Endothelial cell of umbilical vein (primary cell): ENCODE measurements at regions of chr1 and their contacts with region 1.

Region 1: DNA sequence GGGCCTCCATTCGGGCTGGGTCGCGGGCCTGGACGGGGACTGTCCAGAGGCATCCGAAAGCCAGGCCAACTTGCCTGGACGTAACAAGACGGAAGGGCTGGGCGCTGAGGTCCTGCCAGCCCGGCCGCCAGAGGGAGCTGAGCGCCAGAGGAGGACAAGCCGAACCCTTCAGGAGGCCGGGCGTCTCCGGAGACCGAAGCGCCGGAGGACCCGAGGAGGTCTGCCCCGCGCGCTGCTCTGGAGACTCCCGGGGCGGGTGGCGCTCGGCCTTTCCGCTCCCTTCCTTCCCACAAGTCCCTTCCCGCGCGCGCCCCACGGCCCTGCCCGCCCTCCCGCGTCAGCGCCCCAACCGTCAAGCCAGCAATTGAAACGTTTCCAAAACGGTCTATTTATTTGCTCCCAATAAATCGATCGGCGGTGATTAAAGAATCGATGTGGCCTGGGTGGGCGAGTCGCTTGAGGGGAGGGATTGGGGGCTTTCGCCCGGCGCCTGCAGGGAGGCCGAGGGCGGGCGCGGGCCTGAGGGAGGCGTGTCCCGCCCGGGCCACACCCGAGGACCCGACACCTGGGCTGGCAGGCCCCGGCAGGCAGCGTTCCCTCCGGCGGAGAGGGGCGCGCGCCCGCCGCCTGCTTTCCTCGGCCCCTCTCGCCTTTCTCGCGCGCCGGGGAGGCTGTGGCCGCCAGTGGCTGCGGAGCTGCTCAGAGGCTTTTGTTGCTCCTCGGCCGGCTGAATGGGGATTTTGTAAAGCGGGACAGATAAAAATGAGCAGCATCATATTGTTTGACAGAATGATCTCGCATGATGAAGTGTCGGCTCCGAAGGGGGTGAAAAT is 5.2 kb upstream of the FOXD3 start:
- DNase-seq: peak; percentile 54
- H3K4me3 ChIP-seq: peak overlapping the region in 1 of 3 experiments; percentile 21
- H3K27ac ChIP-seq: no peak overlapping the region
- H3K4me1 ChIP-seq: peaks cover 2% of the 10 kb centered on the region
- H3K27me3 ChIP-seq: peaks cover 65 to 72% of the 10 kb centered on the region in 2 experiments
- CTCF ChIP-seq: peak; percentile 57 to 79
- POLR2A ChIP-seq: no peak

Region 2: DNA sequence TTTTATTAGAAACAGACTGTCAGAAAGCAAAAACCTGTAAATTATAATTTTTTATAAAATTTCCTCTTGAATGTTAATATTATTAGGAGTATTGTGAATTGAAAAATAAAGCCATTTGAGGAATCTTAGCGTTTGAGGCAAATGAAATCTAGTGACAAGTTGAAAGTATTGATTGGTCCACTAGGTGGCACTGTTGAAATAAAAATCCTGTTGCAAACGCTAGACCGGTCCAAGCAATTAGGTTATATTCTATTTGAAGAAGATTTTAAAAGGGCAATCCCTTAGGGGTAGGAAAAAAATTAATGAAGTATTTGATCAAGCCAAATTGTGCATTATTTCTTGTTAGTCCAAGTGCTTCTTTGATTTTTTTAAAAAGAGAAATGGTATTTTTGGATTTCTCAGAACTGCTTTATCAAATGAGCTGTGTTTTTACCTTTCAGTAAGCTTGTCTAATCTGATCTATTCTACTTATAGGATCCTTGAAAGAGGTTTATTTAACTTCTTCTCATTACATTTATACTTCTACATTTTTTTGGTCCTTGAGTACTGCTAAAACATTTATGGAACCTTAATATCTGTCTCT is 475.5 kb before region 1 on chr1:
- CTCF ChIA-PET with region 1: no interaction called
- POLR2A ChIA-PET with region 1: no interaction called
- dilution Hi-C with region 1: no loop called
- intact Hi-C with region 1: loop called (anchors 1 kb)
- DNase-seq: peak; percentile 70
- H3K4me3 ChIP-seq: no peak overlapping the region
- H3K27ac ChIP-seq: no peak overlapping the region
- H3K4me1 ChIP-seq: no peaks in the 10 kb centered on the region
- H3K27me3 ChIP-seq: no peaks in the 10 kb centered on the region
- CTCF ChIP-seq: peak; percentile 35 to 37
- POLR2A ChIP-seq: no peak

Region 3: DNA sequence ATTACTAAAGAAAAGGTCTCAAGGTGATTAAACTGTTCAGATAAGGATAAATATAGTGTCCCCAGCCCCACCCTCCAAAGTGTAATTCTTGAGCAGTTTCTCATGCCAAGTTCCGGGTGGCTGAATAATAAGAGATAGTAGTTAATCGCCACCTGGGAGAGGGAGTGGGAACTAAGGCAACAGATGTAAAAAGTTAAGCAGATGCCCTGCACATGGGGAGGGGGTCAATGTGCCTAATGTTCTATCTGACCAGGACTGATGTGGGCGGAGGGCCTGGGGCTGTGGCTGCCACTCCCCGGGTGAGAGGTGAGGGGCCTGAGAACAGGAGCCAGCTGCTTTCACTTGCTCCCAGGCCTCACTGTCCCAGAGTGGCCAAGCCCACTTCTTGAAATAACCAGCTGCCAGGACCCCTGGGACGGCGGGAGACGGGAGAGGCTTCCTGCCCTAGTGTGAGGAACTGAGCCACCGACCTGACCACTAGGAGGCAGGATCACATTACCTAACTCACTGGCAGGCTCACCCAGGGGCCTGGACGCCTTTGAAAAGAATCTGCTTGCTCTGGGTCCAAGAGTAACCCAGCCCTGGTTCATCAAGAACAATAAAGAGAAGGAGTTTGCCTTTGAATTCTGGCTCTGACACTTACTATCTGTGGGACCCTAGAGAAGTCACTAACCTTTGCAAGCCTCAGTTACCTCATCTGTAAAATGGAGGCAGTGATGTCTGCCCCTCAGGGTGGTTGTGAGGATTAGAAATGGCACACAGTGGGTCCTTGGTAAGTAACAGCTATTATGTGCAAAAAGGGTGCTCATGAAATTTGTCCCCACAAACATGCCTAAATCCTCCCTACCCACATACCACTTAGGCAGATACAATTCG is 354.1 kb before region 1 on chr1:
- CTCF ChIA-PET with region 1: interaction called, 3 read pairs
- POLR2A ChIA-PET with region 1: no interaction called
- dilution Hi-C with region 1: no loop called
- intact Hi-C with region 1: loop called (anchors 10 kb)
- DNase-seq: peak; percentile 29
- H3K4me3 ChIP-seq: no peak overlapping the region
- H3K27ac ChIP-seq: no peak overlapping the region
- H3K4me1 ChIP-seq: no peaks in the 10 kb centered on the region
- H3K27me3 ChIP-seq: no peaks in the 10 kb centered on the region
- CTCF ChIP-seq: peak; percentile 51 to 67
- POLR2A ChIP-seq: no peak

Region 4: GRCh38 chr1:63327417-63328139 is 10.4 kb after region 1 on chr1:
- CTCF ChIA-PET with region 1: interaction called, 10 read pairs
- POLR2A ChIA-PET with region 1: no interaction called
- dilution Hi-C with region 1: no loop called
- intact Hi-C with region 1: no loop called
- DNase-seq: peak; percentile 57
- H3K4me3 ChIP-seq: no peak overlapping the region
- H3K27ac ChIP-seq: no peak overlapping the region
- H3K4me1 ChIP-seq: no peaks in the 10 kb centered on the region
- H3K27me3 ChIP-seq: peaks cover 74 to 100% of the 10 kb centered on the region in 2 experiments
- CTCF ChIP-seq: peak; percentile 82 to 90
- POLR2A ChIP-seq: no peak

Region 5: DNA sequence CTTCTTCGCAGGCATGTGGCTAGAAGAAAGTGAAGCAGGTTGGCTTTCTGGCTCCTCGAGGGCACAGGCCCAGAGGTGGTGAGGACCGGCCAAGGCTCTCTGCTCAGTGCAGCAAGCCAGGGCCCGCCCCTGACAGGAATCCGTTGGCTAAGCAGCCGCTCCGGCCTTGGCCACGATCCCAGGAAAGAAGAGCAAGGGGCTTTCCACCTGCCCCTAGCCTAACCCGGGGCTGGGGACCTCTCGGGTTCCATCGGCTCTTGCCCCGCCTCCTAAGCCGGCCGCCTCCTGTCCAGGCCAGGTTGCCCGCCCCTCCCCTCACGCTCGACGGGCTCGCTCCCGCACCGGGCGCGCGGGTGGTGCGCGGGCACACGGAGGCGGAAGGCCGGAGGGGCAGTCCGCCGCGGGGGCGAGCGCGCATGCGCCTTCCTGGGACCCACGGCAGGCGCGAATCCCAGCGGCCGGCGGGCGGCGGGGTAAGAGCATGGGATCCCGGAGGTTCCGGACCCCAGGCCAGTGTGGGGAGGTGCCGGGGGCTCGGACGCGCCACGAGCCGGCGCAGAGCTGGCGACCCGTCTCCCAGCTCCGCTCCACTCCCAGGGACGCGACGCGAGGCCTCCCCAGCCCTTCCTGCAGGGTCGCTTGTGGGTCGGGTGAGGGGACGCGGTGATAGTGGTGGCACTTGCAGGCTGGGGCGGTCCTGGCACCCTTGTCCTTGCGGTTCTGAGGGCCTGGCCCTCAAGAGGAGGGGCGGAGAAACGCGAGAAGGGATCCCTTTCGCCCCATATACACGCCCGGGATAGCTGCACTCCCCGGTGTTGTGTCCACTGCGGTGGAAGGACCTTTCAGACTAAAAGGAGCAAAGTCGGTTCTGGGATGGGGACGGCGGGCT is 50.3 kb after region 1 on chr1 and contains the start of gene ALG6:
- CTCF ChIA-PET with region 1: no interaction called
- POLR2A ChIA-PET with region 1: no interaction called
- dilution Hi-C with region 1: no loop called
- intact Hi-C with region 1: loop called (anchors 2 kb)
- DNase-seq: peak; percentile 95
- H3K4me3 ChIP-seq: peak within 1 kb of the TSS; percentile 29 to 92 (median 65)
- H3K27ac ChIP-seq: no peak within 1 kb of the TSS
- H3K4me1 ChIP-seq: peaks cover 10% of the 10 kb centered on the region
- H3K27me3 ChIP-seq: no peaks in the 10 kb centered on the region
- CTCF ChIP-seq: no peak
- POLR2A ChIP-seq: peak; percentile 88
- total RNA-seq, gene ALG6: 14.4 and 17.3 TPM in 2 replicates